Spleen (tissue), 13 donors: ENCODE measurements at regions of chr16 and their contacts with region 1.

Region 1: GRCh38 chr16:19067349-19068236 is at the start of gene COQ7:
- DNase-seq: peak; percentile 99
- H3K4me3 ChIP-seq: peak within 1 kb of the TSS; percentile 26 to 80 (median 60)
- H3K27ac ChIP-seq: peak within 1 kb of the TSS; percentile 96 to 100 (median 99)
- H3K4me1 ChIP-seq: peaks cover 9 to 32% (median 27%) of the 10 kb centered on the region in 6 donors
- H3K27me3 ChIP-seq: no peaks in the 10 kb centered on the region
- CTCF ChIP-seq: peak in 5 of 11 experiments; percentile 3 to 30 (median 21)
- POLR2A ChIP-seq: peak; percentile 9 to 75 (median 35)
- total RNA-seq, gene COQ7: 11.7 to 23.4 (median 18.7) TPM

Region 2: GRCh38 chr16:18789850-18790724 is 277.5 kb before region 1 on chr16 and contains the start of gene RPS15A:
- intact Hi-C with region 1: loop called (anchors 10 kb)
- DNase-seq: peak; percentile 97
- H3K4me3 ChIP-seq: peak within 1 kb of the TSS; percentile 70 to 94 (median 90)
- H3K27ac ChIP-seq: peak within 1 kb of the TSS; percentile 55 to 92 (median 88)
- H3K4me1 ChIP-seq: peaks cover 38 to 55% (median 46%) of the 10 kb centered on the region in 6 donors
- H3K27me3 ChIP-seq: no peaks in the 10 kb centered on the region
- CTCF ChIP-seq: peak in 2 of 11 experiments; percentile 14 to 22
- POLR2A ChIP-seq: peak in 1 of 3 donors; percentile 29
- total RNA-seq, gene RPS15A: 942 to 2,534 (median 1,484) TPM

Region 3: GRCh38 chr16:18950469-18951185 is 117.0 kb before region 1 on chr16:
- intact Hi-C with region 1: no loop called
- DNase-seq: no peak
- H3K4me3 ChIP-seq: no peak overlapping the region
- H3K27ac ChIP-seq: no peak overlapping the region
- H3K4me1 ChIP-seq: peaks cover 0 to 13% (median 8%) of the 10 kb centered on the region in 6 donors
- H3K27me3 ChIP-seq: no peaks in the 10 kb centered on the region
- CTCF ChIP-seq: no peak
- POLR2A ChIP-seq: no peak

Region 4: DNA sequence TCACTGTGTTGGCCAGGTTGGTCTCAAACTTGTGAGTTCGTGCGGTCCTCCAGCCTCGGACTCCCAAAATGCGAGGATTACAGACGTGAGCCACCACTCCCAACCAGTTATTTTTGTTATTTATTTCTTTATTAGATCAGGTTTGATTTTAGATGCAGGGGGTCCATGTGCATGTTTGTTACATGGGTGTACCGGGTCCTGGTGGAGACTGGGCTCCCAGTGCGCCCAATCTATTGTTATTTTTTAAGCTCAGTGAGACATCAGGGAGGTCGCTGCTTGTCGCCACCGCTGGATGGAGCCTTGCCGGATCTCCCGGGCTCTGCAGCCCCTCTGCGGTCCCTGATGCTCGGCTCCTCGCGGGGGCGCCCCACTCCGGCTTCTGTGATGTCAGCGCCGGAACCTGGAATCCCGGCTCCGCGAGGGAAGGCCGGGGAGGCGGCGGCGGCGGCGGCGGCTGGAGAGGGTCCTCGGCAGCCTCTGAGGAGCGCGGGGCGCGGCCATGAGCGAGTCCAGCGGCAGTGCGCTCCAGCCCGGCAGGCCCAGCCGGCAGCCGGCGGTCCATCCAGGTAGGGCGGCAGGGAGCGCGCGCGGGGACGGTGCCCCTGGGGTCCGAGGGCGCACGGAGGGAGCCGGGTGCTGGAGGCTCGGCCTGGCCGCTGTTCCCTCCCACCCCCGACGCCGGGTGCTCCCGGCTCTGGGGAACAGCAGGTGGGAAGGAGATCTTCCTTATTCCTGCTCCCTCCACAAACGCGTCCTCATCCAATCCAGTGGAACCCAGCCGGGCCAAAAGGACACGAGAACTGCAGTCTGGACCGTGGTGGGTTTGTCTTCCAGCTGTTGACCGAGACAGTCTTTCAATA is 83.8 kb before region 1 on chr16 and contains the start of gene TMC7:
- intact Hi-C with region 1: loop called (anchors 10 kb)
- DNase-seq: peak; percentile 76
- H3K4me3 ChIP-seq: peak within 1 kb of the TSS; percentile 21 to 69 (median 32)
- H3K27ac ChIP-seq: peak within 1 kb of the TSS in 4 of 8 donors; percentile 0 to 57 (median 40)
- H3K4me1 ChIP-seq: peaks cover 0 to 13% (median 10%) of the 10 kb centered on the region in 6 donors
- H3K27me3 ChIP-seq: peaks cover 0 to 55% (median 11%) of the 10 kb centered on the region in 7 donors
- CTCF ChIP-seq: peak in 7 of 11 experiments; percentile 42 to 68 (median 48)
- POLR2A ChIP-seq: no peak
- total RNA-seq, gene TMC7: 0.23 to 0.60 (median 0.37) TPM

Region 5: GRCh38 chr16:19316846-19317245 is 249.3 kb after region 1 on chr16:
- intact Hi-C with region 1: no loop called
- DNase-seq: no peak
- H3K4me3 ChIP-seq: no peak overlapping the region
- H3K27ac ChIP-seq: no peak overlapping the region
- H3K4me1 ChIP-seq: no peaks in the 10 kb centered on the region
- H3K27me3 ChIP-seq: no peaks in the 10 kb centered on the region
- CTCF ChIP-seq: no peak
- POLR2A ChIP-seq: no peak